GM23248 (cell line): ENCODE measurements at regions of chr3 and their contacts with region 1.

Region 1: DNA sequence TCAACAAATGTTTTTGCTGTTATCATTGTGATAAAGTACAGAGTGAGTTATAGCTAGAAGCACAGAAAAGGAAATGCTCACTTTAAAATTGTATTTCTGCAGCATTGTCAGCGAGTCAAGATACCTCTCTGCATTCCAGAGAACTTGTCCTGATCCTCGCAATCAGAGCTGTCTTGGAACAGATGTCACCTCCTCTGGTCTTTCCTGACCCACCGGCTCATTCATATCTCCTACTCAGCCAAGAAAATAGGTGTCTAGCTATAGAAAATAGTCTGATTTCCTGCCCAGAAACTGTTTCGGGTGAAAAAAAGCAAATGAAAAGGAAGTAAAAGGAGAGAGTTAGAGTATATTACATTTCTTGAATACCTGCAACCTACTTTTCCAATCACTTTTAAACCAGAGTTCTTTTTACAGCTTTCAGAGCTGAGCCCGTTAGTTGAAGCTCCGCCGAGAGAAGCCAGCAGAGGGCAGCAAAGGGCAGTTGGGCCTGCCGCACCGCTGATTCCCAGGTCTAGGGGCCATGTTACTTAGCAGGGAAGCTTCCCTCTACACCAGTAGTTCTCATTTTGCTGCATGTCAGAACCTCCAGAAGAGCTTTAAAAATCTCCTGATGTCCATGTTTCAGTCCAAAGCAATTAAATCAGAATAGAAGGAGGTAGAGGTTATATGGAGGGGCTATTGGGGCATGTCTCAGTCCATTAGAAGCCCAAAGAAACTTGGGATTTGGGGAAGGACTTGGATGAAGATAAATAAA is 185.7 kb upstream of the THRB start:
- DNase-seq: peak; percentile 41
- H3K4me3 ChIP-seq: no peak overlapping the region
- H3K27ac ChIP-seq: no peak overlapping the region
- H3K4me1 ChIP-seq: peaks cover 51% of the 10 kb centered on the region
- H3K27me3 ChIP-seq: no peaks in the 10 kb centered on the region

Region 2: DNA sequence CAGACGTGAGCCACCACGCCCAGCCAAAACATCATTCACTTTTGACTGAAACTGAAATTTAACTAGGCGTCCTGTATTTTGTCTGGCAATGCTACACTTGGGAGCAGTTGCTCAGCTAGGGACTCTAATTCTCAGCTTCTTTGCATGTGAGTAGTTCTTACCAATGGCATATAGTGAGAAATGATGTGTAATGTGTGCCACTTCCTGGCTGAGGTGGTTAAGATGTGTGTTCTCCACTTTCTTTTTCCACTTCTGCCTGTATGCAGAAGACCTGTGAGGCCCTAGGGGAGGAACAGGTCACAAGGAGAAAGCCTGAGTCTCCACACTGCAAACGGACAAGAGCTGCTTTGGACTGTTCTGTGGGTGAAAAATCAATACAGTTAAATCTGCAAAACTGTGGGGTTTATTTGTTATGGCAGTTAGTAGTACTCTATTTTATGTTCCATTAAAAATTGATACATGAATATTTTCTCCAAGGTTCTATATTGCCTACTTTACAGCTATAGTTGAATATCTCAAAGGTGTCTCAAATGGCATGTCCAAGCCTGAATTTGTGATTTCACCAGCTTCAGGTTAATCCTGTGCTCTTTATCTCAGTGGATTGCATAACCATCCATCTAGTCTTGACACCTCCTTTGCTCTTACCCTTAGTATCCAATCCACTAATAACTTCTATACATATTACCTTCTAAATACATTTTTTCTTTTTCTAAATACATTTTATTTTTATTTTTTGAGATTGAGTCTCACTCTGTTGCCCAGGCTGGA is 676.0 kb before region 1 on chr3:
- in situ Hi-C with region 1: loop called (anchors 25 kb)
- DNase-seq: no peak
- H3K4me3 ChIP-seq: no peak overlapping the region
- H3K27ac ChIP-seq: no peak overlapping the region
- H3K4me1 ChIP-seq: peaks cover 6% of the 10 kb centered on the region; the same call in 1 of the 2 replicates
- H3K27me3 ChIP-seq: no peaks in the 10 kb centered on the region

Region 3: DNA sequence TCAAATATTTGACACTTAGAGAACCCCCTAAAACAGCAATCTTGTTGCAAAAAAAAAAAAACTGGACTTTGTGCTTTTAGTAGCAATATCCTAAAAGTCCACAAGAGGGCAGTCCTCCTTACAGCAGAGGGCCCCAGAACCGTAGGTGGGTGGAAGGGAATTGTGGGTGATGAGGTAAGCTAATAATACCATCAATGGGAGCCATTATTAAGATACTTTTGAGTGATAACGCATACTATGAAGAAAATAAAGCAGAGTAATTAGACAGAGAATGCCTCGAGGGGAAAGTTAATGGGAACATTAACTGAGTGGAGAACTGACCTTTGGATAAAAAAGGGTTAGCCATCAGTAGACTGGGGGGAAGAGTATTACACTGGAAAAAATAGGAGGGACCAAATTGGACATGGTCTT is 415.6 kb before region 1 on chr3:
- in situ Hi-C with region 1: loop called (anchors 25 kb)
- DNase-seq: peak; percentile 71
- H3K4me3 ChIP-seq: no peak overlapping the region
- H3K27ac ChIP-seq: no peak overlapping the region
- H3K4me1 ChIP-seq: peaks cover 7% of the 10 kb centered on the region
- H3K27me3 ChIP-seq: no peaks in the 10 kb centered on the region

Region 4: DNA sequence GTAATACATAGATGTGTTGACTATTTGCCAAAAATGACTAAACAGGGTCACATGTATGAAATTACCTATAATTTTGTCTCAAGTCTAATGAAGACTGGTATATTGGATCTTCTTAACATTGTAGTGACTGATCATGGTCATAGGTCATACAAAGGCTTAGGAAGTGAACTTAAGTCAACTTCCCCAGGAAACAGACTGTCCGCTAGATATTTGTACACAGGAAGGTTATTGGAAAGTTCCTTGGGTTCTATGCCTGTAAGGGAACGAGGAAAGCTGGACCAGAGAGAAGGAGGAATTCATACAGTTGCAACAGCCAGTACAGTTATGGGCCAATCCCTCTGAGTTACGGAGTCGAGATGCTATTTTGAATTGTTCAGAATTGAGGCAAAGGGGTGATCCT is 276.2 kb after region 1 on chr3:
- in situ Hi-C with region 1: no loop called
- DNase-seq: no peak
- H3K4me3 ChIP-seq: no peak overlapping the region
- H3K27ac ChIP-seq: no peak overlapping the region
- H3K4me1 ChIP-seq: no peaks in the 10 kb centered on the region
- H3K27me3 ChIP-seq: no peaks in the 10 kb centered on the region